Activated B cell treated with CpG ODN at 0.5 μM for 24 hours (primary cell): ENCODE measurements at regions of chr3 and their contacts with region 1.

Region 1: DNA sequence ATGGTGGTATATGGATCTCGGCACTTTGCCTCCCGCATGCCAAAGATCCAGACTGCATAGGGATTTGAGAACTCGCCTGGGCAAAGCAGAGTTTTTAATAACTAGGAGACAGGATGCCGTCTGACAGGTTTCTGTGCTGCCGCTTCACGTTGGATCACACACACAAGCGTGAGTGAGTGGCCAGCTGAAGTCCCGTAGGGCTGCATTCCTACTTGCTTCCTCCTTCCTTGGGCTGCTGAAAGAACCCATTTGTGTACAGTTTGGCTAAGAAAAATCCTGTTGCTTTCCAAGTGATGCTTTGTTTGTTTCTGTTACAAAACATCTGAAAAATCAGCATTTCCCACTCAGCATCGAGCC is 604.3 kb upstream of the CFAP20DC start:
- DNase-seq: no peak
- ATAC-seq: no peak
- H3K4me3 Mint-ChIP-seq: no peak overlapping the region
- H3K27ac Mint-ChIP-seq: no peak overlapping the region
- H3K4me1 Mint-ChIP-seq: no peaks in the 10 kb centered on the region
- H3K27me3 Mint-ChIP-seq: no peaks in the 10 kb centered on the region
- CTCF ChIP-seq: no peak

Region 2: GRCh38 chr3:58560771-58561311 is 1093.3 kb before region 1 on chr3:
- CTCF ChIA-PET with region 1: no interaction called
- POLR2A ChIA-PET with region 1: interaction called, 10 read pairs
- intact Hi-C with region 1: no loop called
- DNase-seq: no peak
- ATAC-seq: no peak
- H3K4me3 Mint-ChIP-seq: no peak overlapping the region
- H3K27ac Mint-ChIP-seq: no peak overlapping the region
- H3K4me1 Mint-ChIP-seq: no peaks in the 10 kb centered on the region
- H3K27me3 Mint-ChIP-seq: peaks cover 9% of the 10 kb centered on the region
- CTCF ChIP-seq: no peak

Region 3: GRCh38 chr3:59737241-59737640 is 83.1 kb after region 1 on chr3:
- CTCF ChIA-PET with region 1: no interaction called
- POLR2A ChIA-PET with region 1: no interaction called
- intact Hi-C with region 1: no loop called
- DNase-seq: no peak
- ATAC-seq: no peak
- H3K4me3 Mint-ChIP-seq: no peak overlapping the region
- H3K27ac Mint-ChIP-seq: no peak overlapping the region
- H3K4me1 Mint-ChIP-seq: peaks cover 4% of the 10 kb centered on the region
- H3K27me3 Mint-ChIP-seq: peaks cover 5% of the 10 kb centered on the region
- CTCF ChIP-seq: no peak

Region 4: DNA sequence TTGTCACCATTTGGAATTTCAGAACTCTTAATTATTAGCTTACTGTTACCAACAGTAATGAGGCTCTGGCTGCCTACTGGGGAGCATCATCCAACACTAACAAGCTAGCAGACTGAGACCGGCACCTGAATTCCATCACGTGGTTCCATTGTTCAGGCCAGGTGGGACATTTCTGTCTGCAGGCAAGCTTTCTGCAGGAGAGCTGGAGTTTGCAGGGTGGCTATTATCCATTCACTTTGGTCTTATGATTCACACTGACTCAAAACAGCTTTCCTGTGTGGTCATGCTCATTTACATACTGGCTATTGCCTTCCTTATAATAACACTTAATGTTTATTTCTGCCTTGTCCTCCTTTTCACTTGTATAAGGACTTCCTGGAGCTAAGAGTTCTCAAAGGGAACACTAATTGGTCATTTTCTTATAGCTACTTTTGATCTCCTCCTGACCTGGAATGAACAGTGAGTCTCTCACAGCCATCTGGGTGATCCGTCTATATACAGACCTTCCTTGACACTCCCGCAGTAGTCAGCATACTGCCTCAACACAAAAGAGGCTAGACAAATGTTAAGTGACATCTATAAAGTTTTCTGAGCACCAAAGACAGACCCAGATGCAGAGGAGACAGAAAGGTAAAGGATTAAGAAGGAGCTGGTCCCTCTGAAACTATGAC is 901.7 kb after region 1 on chr3:
- CTCF ChIA-PET with region 1: no interaction called
- POLR2A ChIA-PET with region 1: no interaction called
- intact Hi-C with region 1: no loop called
- DNase-seq: no peak
- ATAC-seq: peak; percentile 42
- H3K4me3 Mint-ChIP-seq: no peak overlapping the region
- H3K27ac Mint-ChIP-seq: no peak overlapping the region
- H3K4me1 Mint-ChIP-seq: peaks cover 13% of the 10 kb centered on the region
- H3K27me3 Mint-ChIP-seq: no peaks in the 10 kb centered on the region
- CTCF ChIP-seq: no peak